Activated naive CD8-positive, alpha-beta T cell treated with anti-CD3 and anti-CD28 coated beads, Interleukin-2, amount 10 ng/mL, durations not matched to agents 7 days and 5 days (primary cell): ENCODE measurements at regions of chr11 and their contacts with region 1.

Region 1: GRCh38 chr11:299951-300735 is 817 bp upstream of the IFITM5 start:
- DNase-seq: peak; percentile 57
- ATAC-seq: no peak
- H3K4me3 Mint-ChIP-seq: peak overlapping the region; percentile 44
- H3K27ac Mint-ChIP-seq: peak overlapping the region; percentile 58
- H3K4me1 Mint-ChIP-seq: peaks cover 52% of the 10 kb centered on the region
- H3K27me3 Mint-ChIP-seq: peaks cover 8% of the 10 kb centered on the region

Region 2: GRCh38 chr11:288328-289144 is 11.6 kb before region 1 on chr11 and contains the start of gene PGGHG:
- POLR2A ChIA-PET with region 1: interaction called, 264 read pairs
- DNase-seq: peak; percentile 88
- ATAC-seq: peak; percentile 38
- H3K4me3 Mint-ChIP-seq: peak within 1 kb of the TSS; percentile 93
- H3K27ac Mint-ChIP-seq: peak within 1 kb of the TSS; percentile 98
- H3K4me1 Mint-ChIP-seq: peaks cover 34% of the 10 kb centered on the region
- H3K27me3 Mint-ChIP-seq: no peaks in the 10 kb centered on the region
- total RNA-seq, gene PGGHG: 641 to 664 TPM

Region 3: GRCh38 chr11:554824-555472 is 254.8 kb after region 1 on chr11:
- POLR2A ChIA-PET with region 1: no interaction called
- DNase-seq: peak; percentile 84
- ATAC-seq: peak; percentile 71
- H3K4me3 Mint-ChIP-seq: peak overlapping the region; percentile 61
- H3K27ac Mint-ChIP-seq: no peak overlapping the region
- H3K4me1 Mint-ChIP-seq: peaks cover 4% of the 10 kb centered on the region
- H3K27me3 Mint-ChIP-seq: peaks cover 18% of the 10 kb centered on the region